Endothelial cell of umbilical vein (primary cell): ENCODE measurements at regions of chr1 and their contacts with region 1.

Region 1: DNA sequence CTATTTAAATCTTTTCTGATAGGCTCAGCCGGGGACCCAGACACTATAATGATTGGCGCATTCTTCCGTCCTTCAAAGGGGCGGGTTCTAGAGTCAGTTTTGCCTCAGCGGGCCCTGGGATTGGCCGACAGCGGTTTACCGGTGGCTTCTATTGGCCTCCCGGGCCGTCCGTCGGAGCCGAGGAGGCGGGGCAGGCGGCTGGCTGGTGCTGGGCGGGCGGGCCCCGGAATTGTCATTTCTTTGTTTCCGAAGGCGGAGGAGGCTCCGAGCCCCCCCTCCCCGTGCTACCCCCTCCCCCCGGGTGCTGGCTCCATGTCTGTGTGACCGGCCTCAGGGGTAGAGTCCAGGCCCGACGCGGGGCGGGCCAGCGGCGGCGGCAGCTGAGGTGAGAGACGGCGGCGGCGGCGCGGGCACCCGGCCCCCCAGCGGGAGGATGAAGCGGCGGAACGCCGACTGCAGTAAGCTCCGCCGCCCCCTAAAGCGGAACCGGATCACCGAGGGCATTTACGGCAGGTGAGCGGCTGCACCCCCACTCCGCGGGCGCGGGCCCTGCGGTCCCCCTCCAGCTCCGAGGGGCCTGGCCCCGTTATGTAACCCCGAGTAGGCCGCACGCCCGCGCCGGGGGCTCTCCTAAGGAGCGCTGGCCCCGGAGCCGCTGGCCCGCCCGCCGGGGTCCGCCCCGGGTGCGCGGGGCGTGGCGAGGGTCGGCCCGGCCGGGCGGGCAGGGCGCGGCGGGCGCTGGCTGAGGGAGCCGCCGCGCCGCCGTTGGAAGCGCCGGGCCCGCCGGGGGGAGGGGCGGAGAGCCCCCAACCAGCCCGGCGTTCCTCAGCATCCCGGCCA is at the start of gene MACO1:
- DNase-seq: peak; percentile 97
- H3K4me3 ChIP-seq: peak within 1 kb of the TSS; percentile 86 to 97 (median 95)
- H3K27ac ChIP-seq: peak within 1 kb of the TSS; percentile 74
- H3K4me1 ChIP-seq: peaks cover 39% of the 10 kb centered on the region
- H3K27me3 ChIP-seq: no peaks in the 10 kb centered on the region
- CTCF ChIP-seq: no peak
- POLR2A ChIP-seq: no peak
- total RNA-seq, gene MACO1: 24.4 and 25.5 TPM in 2 replicates

Region 2: DNA sequence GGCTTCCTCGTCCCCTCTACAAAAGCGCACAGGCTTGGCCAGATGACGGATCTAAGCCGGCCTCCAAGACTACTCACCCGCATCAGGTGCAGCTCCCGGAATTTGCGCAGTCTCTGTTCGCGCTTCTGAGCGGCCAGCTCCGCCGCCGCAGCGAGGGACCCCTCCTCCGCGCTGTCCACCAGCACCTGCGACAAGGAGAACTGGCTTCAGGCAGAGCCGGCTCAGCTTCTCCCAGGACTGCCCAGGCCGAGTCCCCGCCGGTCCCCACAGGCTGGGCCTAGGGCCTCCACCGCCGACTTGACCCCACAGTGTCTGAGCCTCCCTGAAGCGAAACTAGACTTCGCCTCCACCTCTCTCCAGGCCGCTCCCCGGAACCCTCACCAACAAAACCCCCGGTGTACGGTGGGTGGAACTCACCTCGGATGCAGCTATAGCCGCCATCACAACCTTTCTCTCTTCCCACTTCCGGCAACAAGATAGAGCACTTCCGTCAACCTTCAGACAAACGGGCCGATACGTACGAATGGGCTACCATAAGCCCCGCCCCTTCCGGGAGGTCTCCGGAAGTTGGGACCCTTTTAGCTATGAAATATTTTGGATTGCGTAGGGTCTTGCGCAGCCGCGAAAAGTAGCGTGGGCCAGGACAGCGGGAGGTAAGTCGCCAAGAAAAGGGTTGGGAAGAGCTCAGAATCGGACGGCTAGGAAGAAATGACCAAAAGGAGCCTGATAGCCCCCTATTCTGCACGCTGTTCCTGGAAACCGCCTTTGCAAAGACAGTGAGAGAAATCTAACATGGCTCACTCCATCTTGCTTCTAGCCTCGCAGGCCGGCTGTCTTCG is 198.6 kb before region 1 on chr1 and contains the start of gene SYF2:
- CTCF ChIA-PET with region 1: no interaction called
- POLR2A ChIA-PET with region 1: no interaction called
- dilution Hi-C with region 1: no loop called
- intact Hi-C with region 1: loop called (anchors 1 kb)
- DNase-seq: peak; percentile 89
- H3K4me3 ChIP-seq: peak within 1 kb of the TSS; percentile 64 to 88 (median 87)
- H3K27ac ChIP-seq: peak within 1 kb of the TSS; percentile 60
- H3K4me1 ChIP-seq: peaks cover 26% of the 10 kb centered on the region
- H3K27me3 ChIP-seq: no peaks in the 10 kb centered on the region
- CTCF ChIP-seq: no peak
- POLR2A ChIP-seq: peak; percentile 57
- total RNA-seq, gene SYF2: 38.0 and 40.2 TPM in 2 replicates

Region 3: GRCh38 chr1:25338188-25338981 is 92.5 kb before region 1 on chr1 and contains the start of gene TMEM50A:
- CTCF ChIA-PET with region 1: no interaction called
- POLR2A ChIA-PET with region 1: no interaction called
- dilution Hi-C with region 1: no loop called
- intact Hi-C with region 1: loop called (anchors 5 kb)
- DNase-seq: peak; percentile 93
- H3K4me3 ChIP-seq: peak within 1 kb of the TSS; percentile 74 to 97 (median 85)
- H3K27ac ChIP-seq: peak within 1 kb of the TSS; percentile 91
- H3K4me1 ChIP-seq: peaks cover 18% of the 10 kb centered on the region
- H3K27me3 ChIP-seq: no peaks in the 10 kb centered on the region
- CTCF ChIP-seq: no peak
- POLR2A ChIP-seq: peak; percentile 45
- total RNA-seq, gene TMEM50A: 130 and 140 TPM in 2 replicates

Region 4: GRCh38 chr1:25487628-25488027 is 56.7 kb after region 1 on chr1:
- CTCF ChIA-PET with region 1: interaction called, 6 read pairs
- POLR2A ChIA-PET with region 1: no interaction called
- dilution Hi-C with region 1: no loop called
- intact Hi-C with region 1: loop called (anchors 5 kb)
- DNase-seq: no peak
- H3K4me3 ChIP-seq: no peak overlapping the region
- H3K27ac ChIP-seq: no peak overlapping the region
- H3K4me1 ChIP-seq: no peaks in the 10 kb centered on the region
- H3K27me3 ChIP-seq: no peaks in the 10 kb centered on the region
- CTCF ChIP-seq: peak; percentile 42 to 58
- POLR2A ChIP-seq: no peak

Region 5: DNA sequence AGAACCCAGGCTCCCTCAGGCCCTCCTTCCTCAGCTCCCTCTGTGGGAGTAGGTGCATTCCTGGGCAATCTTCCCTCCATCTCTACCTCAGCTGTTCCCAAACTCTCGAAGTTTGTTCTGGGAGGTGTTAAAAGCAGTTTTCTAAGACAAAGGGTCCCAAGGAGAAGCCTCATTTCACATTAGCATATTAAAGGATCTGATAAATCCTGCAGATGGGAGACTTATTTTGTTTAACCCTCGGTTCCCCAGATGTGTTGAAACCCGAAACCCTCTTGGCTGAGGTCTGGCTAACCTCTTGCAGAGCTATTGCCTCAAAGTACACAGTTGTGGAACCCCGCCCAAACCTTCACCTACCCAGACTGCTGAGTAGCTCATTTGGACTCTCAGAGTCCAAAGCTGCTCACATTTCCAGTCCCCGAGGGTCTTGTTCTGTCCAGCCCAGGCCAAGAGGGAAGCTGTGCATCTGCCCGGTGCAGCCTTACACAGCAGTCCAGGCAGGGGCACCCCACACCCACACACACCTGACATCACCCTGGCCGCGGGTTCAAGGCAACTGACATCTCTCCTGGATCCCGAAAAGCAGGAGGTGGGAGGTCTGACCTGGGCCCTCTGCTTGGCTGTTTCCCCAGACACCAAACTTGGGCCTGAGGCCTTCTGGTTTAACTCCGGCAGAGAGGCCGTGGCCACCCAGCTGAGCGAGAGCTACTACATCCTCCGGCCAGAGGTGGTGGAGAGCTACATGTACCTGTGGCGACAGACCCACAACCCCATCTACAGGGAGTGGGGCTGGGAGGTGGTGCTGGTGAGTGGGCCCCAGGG is 349.6 kb after region 1 on chr1:
- CTCF ChIA-PET with region 1: no interaction called
- POLR2A ChIA-PET with region 1: no interaction called
- dilution Hi-C with region 1: no loop called
- intact Hi-C with region 1: no loop called
- DNase-seq: no peak
- H3K4me3 ChIP-seq: no peak overlapping the region
- H3K27ac ChIP-seq: no peak overlapping the region
- H3K4me1 ChIP-seq: no peaks in the 10 kb centered on the region
- H3K27me3 ChIP-seq: no peaks in the 10 kb centered on the region
- CTCF ChIP-seq: no peak
- POLR2A ChIP-seq: no peak